CD8-positive, alpha-beta memory T cell (primary cell): ENCODE measurements at regions of chr1 and their contacts with region 1.

Region 1: GRCh38 chr1:229661022-229661877 is 35.2 kb downstream of the URB2 start:
- DNase-seq: peak; percentile 43 to 75 (median 52)
- H3K4me3 ChIP-seq: no peak overlapping the region
- H3K4me3 Mint-ChIP-seq: no peak overlapping the region
- H3K27ac ChIP-seq: no peak overlapping the region
- H3K27ac Mint-ChIP-seq: peak overlapping the region in 3 of 8 donors; percentile 56 to 89 (median 76)
- H3K4me1 ChIP-seq: peaks cover 15% of the 10 kb centered on the region
- H3K4me1 Mint-ChIP-seq: peaks cover 0 to 4% (median 3%) of the 10 kb centered on the region in 3 donors
- H3K27me3 ChIP-seq: no peaks in the 10 kb centered on the region
- H3K27me3 Mint-ChIP-seq: peaks cover 0 to 2% of the 10 kb centered on the region in 2 donors

Region 2: GRCh38 chr1:229674042-229674441 is 12.8 kb after region 1 on chr1:
- CTCF ChIA-PET with region 1: interaction called, 14 read pairs
- POLR2A ChIA-PET with region 1: no interaction called
- DNase-seq: no peak
- H3K4me3 ChIP-seq: no peak overlapping the region
- H3K4me3 Mint-ChIP-seq: no peak overlapping the region
- H3K27ac ChIP-seq: no peak overlapping the region
- H3K27ac Mint-ChIP-seq: no peak overlapping the region
- H3K4me1 ChIP-seq: no peaks in the 10 kb centered on the region
- H3K4me1 Mint-ChIP-seq: no peaks in the 10 kb centered on the region
- H3K27me3 ChIP-seq: no peaks in the 10 kb centered on the region
- H3K27me3 Mint-ChIP-seq: no peaks in the 10 kb centered on the region

Region 3: DNA sequence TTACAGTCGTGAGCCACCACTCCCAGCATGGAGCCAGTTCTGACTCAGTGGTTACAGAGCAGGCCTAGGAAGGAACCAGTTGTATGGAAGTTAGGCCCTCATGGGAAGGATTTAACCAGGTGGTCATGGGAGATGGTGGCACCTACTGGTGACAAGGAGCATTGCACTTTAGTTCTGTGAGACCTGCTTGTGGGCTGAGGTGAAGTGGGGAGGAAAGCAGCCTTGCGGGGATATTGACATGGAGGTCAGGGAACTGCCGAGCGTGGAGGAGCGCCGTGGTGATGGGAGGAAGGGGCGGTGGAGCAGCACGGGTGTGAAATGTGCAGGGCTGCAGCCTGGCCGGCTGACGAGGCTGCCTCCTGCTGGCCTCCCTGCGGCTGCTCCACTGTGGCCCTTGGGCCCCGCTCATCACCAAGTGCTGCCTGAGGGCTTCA is 506.2 kb after region 1 on chr1:
- CTCF ChIA-PET with region 1: interaction called, 15 read pairs
- POLR2A ChIA-PET with region 1: no interaction called
- DNase-seq: peak; percentile 14 to 63 (median 34)
- H3K4me3 ChIP-seq: no peak overlapping the region
- H3K4me3 Mint-ChIP-seq: peak overlapping the region in 3 of 7 donors; percentile 1 to 27 (median 21)
- H3K27ac ChIP-seq: no peak overlapping the region
- H3K27ac Mint-ChIP-seq: peak overlapping the region in 2 of 8 donors; percentile 4 to 9
- H3K4me1 ChIP-seq: peaks cover 7% of the 10 kb centered on the region
- H3K4me1 Mint-ChIP-seq: peaks cover 24 to 57% (median 35%) of the 10 kb centered on the region in 3 donors
- H3K27me3 ChIP-seq: no peaks in the 10 kb centered on the region
- H3K27me3 Mint-ChIP-seq: no peaks in the 10 kb centered on the region

Region 4: DNA sequence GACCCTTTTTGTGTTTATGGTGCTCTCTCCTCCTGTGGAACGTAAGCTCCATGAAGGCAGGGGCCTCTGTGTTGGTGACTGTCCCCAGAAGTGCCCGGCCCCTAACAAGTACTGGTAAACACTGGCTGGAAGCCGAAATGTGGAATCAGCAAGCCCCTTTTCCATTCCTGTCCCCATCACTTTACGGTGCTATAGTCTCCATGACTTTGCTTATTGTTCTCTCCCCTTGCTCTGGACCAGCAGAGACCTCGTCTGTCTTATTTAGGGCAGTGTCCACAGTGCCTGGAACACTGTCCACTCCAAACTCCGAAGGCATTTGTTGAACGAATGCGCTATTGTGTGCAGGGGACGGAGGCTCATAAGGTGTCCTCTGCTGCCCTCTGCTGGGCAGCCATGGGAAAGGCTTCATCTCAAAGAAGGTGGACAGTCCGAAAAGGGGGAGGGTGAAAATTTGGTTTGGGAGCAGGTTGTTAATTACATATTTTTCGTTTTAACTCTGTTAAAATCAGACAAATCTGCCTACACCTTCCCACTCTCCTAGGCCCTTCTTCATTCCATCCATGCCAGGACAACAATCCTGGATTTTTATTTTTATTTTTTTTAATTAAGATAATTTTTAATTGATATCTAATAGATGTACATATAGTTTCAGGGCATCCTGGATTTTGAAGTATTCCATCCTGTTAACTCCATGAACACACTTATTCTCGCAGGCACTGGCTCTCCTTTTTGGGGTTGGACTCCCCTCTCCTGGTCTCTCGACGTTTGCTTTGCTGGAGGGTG is 649.3 kb after region 1 on chr1:
- CTCF ChIA-PET with region 1: interaction called, 12 read pairs
- POLR2A ChIA-PET with region 1: no interaction called
- DNase-seq: peak; percentile 45 to 75 (median 50)
- H3K4me3 ChIP-seq: no peak overlapping the region
- H3K4me3 Mint-ChIP-seq: peak overlapping the region in 1 of 7 donors; percentile 59
- H3K27ac ChIP-seq: no peak overlapping the region
- H3K27ac Mint-ChIP-seq: no peak overlapping the region
- H3K4me1 ChIP-seq: peaks cover 4% of the 10 kb centered on the region
- H3K4me1 Mint-ChIP-seq: peaks cover 3 to 9% (median 7%) of the 10 kb centered on the region in 3 donors
- H3K27me3 ChIP-seq: no peaks in the 10 kb centered on the region
- H3K27me3 Mint-ChIP-seq: peaks cover 4 to 11% of the 10 kb centered on the region in 2 donors